ENCODE measurements at regions of chr15 and their contacts with region 1.

Region 1: DNA sequence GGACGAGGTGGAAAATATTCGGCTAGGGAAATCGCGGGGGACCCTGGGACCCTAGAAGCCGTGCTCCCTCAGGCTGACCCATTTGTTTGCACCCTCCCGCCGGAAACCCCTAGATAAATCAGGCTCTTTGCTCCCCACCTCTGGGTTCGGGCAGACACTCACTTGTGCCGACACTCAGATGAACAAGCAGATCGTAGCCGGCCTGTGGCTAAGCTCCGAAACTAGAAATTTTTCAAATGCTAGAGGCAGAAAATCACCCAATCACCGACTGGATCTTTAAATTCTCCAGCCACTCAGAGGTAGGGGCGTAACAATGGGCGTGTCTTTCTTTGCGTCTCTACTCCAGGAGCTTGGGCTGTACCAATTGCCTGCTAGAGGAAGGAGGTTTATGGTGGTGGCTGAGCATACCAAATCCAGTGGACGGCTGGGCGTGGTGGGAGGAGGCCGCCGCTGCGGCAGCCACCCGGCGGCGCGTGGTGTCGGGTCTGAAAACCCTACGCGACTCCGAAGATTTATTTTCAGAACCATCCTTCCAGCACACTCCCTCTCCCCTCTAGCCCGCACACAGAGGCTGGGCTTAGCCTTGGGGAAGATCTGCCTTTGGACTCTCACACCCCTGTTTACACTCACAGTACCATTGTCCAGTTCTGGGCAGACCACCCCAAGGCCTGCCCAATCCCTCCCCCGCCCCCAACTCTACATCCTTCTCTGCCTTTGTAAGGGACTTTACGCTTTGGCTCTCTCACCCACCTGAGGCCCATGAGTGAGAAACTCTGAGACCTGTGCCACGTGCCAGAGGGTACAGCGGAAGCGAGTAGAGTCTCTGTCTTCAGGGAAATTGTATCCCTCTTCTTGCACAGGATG is at the start of gene PIF1:
- DNase-seq: peak; percentile 90 to 91
- H3K4me3 ChIP-seq: peak within 1 kb of the TSS; percentile 95
- H3K27ac ChIP-seq: peak within 1 kb of the TSS; percentile 56
- H3K4me1 ChIP-seq: no peaks in the 10 kb centered on the region; the same call in 1 of the 2 replicates
- H3K27me3 ChIP-seq: no peaks in the 10 kb centered on the region
- CTCF ChIP-seq: no peak
- total RNA-seq, gene PIF1: 54.8 and 67.6 TPM in 2 replicates

Region 2: DNA sequence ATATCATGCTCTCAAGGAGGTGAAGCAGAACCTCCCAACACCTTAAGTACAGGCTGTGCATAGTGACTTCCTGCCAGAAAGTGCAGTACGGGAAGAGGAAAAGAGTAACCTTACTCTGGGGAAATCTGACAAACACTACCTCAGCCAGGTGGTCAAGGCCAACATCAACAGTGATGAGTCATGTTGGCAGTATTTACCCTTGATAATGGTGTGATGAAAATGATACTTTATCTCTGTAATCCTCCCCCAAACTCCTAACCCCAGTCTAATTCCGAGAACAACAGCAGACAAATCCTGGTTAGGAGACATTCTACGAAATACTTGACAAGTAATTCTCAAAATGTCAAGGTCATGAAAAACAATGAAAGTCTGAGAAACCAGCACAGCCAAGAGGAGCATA is 112.5 kb after region 1 on chr15:
- CTCF ChIA-PET with region 1: no interaction called
- POLR2A ChIA-PET with region 1: interaction called, 10 read pairs
- intact Hi-C with region 1: no loop called
- DNase-seq: peak; percentile 35 to 72
- H3K4me3 ChIP-seq: no peak overlapping the region
- H3K27ac ChIP-seq: peak overlapping the region; percentile 64
- H3K4me1 ChIP-seq: peaks cover 9% of the 10 kb centered on the region
- H3K27me3 ChIP-seq: no peaks in the 10 kb centered on the region
- CTCF ChIP-seq: no peak

Region 3: GRCh38 chr15:64979252-64979710 is 153.6 kb after region 1 on chr15:
- CTCF ChIA-PET with region 1: no interaction called
- POLR2A ChIA-PET with region 1: interaction called, 21 read pairs
- intact Hi-C with region 1: no loop called
- DNase-seq: no peak
- H3K4me3 ChIP-seq: no peak overlapping the region
- H3K27ac ChIP-seq: no peak overlapping the region
- H3K4me1 ChIP-seq: no peaks in the 10 kb centered on the region
- H3K27me3 ChIP-seq: no peaks in the 10 kb centered on the region
- CTCF ChIP-seq: no peak

Region 4: GRCh38 chr15:65336493-65337455 is 511.1 kb after region 1 on chr15:
- CTCF ChIA-PET with region 1: no interaction called
- POLR2A ChIA-PET with region 1: interaction called, 13 read pairs
- intact Hi-C with region 1: no loop called
- DNase-seq: no peak
- H3K4me3 ChIP-seq: no peak overlapping the region
- H3K27ac ChIP-seq: no peak overlapping the region
- H3K4me1 ChIP-seq: no peaks in the 10 kb centered on the region
- H3K27me3 ChIP-seq: no peaks in the 10 kb centered on the region
- CTCF ChIP-seq: no peak

Measured in PC-9 (cell line).